Vagina (tissue), 2 donors: ENCODE measurements at regions of chr2 and their contacts with region 1.

Region 1: DNA sequence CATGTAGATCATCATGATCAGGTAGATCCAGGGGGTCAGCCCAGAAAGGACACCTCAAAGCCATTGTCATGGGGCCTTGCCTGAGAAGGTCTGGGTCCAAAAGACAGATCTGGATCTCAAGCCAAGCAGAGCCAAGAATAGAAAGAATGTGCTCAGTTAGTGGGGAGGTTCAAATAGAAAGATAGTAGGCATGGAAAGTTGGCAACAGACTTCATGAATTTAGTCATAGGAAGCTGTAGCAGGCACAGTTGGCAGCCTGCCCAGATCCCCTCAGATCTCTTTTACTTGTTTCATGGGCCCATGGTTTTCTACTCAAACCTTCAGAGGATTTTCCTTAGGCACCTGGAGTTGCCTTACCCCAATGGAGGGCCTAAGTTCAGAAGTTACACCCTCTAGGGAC is 767.0 kb downstream of the SLC4A3 start:
- DNase-seq: no peak
- H3K4me3 ChIP-seq: no peak overlapping the region
- H3K27ac ChIP-seq: no peak overlapping the region
- H3K4me1 ChIP-seq: no peaks in the 10 kb centered on the region
- H3K27me3 ChIP-seq: no peaks in the 10 kb centered on the region
- CTCF ChIP-seq: no peak
- POLR2A ChIP-seq: no peak

Region 2: DNA sequence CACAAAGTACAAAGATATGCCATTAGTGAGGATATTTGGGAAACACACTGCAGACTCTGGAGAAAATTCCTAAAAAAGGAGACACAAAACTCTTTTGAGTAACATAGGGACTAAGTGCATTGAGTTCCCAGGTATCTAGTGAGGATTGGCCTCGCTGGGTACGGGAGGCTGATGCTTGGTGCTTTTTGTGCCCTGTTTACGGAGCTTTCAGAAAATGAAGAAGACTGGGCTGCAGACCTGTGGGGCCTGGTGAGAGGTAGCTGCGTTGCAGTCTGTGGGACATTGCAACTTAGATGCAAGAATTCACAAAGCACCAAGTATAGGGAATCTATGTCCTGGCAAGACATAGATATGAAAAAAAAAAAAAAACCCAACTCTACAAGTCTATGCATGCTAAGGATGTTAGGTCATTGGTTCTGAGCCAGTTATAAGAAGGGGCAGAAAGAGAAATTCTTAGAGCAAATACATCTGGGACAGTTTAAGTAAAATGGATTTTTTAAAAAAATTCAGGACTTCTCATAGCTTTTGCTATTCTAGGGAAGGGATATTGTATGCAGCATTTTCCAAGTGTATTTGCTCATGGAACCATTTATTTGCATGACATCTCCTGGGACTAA is 611.0 kb before region 1 on chr2:
- intact Hi-C with region 1: no loop called
- DNase-seq: no peak
- H3K4me3 ChIP-seq: no peak overlapping the region
- H3K27ac ChIP-seq: no peak overlapping the region
- H3K4me1 ChIP-seq: no peaks in the 10 kb centered on the region
- H3K27me3 ChIP-seq: no peaks in the 10 kb centered on the region
- CTCF ChIP-seq: no peak
- POLR2A ChIP-seq: no peak

Region 3: GRCh38 chr2:220334210-220334609 is 60.2 kb before region 1 on chr2:
- intact Hi-C with region 1: no loop called
- DNase-seq: no peak
- H3K4me3 ChIP-seq: no peak overlapping the region
- H3K27ac ChIP-seq: no peak overlapping the region
- H3K4me1 ChIP-seq: no peaks in the 10 kb centered on the region
- H3K27me3 ChIP-seq: no peaks in the 10 kb centered on the region
- CTCF ChIP-seq: no peak
- POLR2A ChIP-seq: no peak

Region 4: DNA sequence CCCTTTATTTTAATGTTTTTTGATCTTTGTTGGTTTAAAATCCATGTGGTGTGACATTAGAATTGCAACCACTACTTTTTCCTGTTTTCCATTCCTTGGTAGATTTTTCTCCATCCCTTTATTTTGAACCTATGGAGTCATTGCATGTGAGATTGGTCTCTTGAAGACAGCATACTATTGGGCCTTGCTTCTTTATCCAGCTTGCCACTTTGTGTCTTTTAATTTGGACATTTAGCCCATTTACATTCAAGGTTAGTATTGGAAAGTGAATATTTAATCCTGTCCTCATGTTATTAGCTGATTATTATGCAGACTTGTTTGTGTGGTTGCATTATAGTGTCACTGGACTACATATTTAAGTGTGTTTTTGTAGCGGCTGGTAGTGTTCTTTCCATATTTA is 15.9 kb after region 1 on chr2:
- intact Hi-C with region 1: loop called (anchors 1 kb)
- DNase-seq: no peak
- H3K4me3 ChIP-seq: no peak overlapping the region
- H3K27ac ChIP-seq: no peak overlapping the region
- H3K4me1 ChIP-seq: no peaks in the 10 kb centered on the region
- H3K27me3 ChIP-seq: no peaks in the 10 kb centered on the region
- CTCF ChIP-seq: no peak
- POLR2A ChIP-seq: no peak

Region 5: GRCh38 chr2:220469201-220469600 is 74.8 kb after region 1 on chr2:
- intact Hi-C with region 1: no loop called
- DNase-seq: no peak
- H3K4me3 ChIP-seq: no peak overlapping the region
- H3K27ac ChIP-seq: no peak overlapping the region
- H3K4me1 ChIP-seq: peaks cover 14% of the 10 kb centered on the region
- H3K27me3 ChIP-seq: no peaks in the 10 kb centered on the region
- CTCF ChIP-seq: no peak
- POLR2A ChIP-seq: no peak